ENCODE measurements at regions of chr3 and their contacts with region 1.

Region 1: GRCh38 chr3:196739671-196740480 is at the start of gene PAK2:
- DNase-seq: peak; percentile 82 to 93 (median 86)
- ATAC-seq: peak; percentile 76 to 83
- H3K4me3 Mint-ChIP-seq: peak within 1 kb of the TSS; percentile 95 to 100 (median 98)
- H3K27ac Mint-ChIP-seq: peak within 1 kb of the TSS; percentile 95 to 100 (median 99)
- H3K4me1 Mint-ChIP-seq: peaks cover 16 to 40% (median 29%) of the 10 kb centered on the region in 4 donors
- H3K27me3 Mint-ChIP-seq: no peaks in the 10 kb centered on the region
- polyA plus RNA-seq, gene PAK2: 28.4 to 30.3 (median 30.1) TPM

Region 2: GRCh38 chr3:196568246-196569002 is 171.5 kb before region 1 on chr3 and contains the starts of genes FBXO45 and WDR53:
- POLR2A ChIA-PET with region 1: interaction called, 14 read pairs
- DNase-seq: peak; percentile 92 to 96 (median 95)
- ATAC-seq: peak; percentile 91 to 92
- H3K4me3 Mint-ChIP-seq: peak within 1 kb of the TSS; percentile 85 to 99 (median 97)
- H3K27ac Mint-ChIP-seq: peak within 1 kb of the TSS; percentile 90 to 99 (median 98)
- H3K4me1 Mint-ChIP-seq: peaks cover 17 to 52% (median 35%) of the 10 kb centered on the region in 4 donors
- H3K27me3 Mint-ChIP-seq: no peaks in the 10 kb centered on the region
- polyA plus RNA-seq, gene FBXO45: 1.7 to 2.9 (median 2.8) TPM
- polyA plus RNA-seq, gene WDR53: 11.8 to 17.4 (median 12.6) TPM

Region 3: GRCh38 chr3:196677353-196677752 is 62.5 kb before region 1 on chr3:
- POLR2A ChIA-PET with region 1: no interaction called
- DNase-seq: no peak
- ATAC-seq: no peak
- H3K4me3 Mint-ChIP-seq: no peak overlapping the region
- H3K27ac Mint-ChIP-seq: no peak overlapping the region
- H3K4me1 Mint-ChIP-seq: peaks cover 0 to 14% (median 0%) of the 10 kb centered on the region in 4 donors
- H3K27me3 Mint-ChIP-seq: no peaks in the 10 kb centered on the region

Region 4: DNA sequence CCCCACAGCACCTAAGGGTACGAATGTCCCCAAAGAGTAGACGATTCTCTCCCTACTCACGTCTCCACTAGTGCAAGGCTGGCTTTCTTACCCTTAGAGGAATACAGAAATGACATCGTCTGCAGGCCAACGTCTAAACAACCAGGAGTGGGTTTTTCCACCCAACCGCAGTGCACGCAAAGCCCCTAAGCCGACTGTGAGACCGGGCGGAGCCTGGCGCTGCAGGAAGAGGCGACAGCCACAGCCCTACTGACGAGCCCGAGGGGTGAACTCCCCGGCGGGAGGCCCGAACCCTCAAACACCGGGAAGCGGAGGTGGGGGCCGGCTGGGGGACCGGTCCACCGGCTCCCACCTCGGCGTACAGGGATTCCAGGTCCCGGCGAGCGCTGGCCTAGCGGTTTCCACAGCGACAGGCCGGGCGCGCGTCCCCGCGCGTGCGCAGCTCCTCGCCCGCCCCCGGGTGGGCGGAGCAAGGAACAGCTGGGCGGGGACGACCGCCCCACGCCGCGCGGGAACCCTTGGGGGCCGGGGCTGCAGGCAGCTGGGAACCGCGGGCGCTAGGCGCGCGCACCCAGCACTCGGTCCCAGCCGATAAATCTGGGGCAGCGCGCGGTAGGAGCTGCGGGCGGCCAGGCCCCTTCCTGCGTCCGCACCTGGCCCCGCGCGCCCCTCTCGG is 27.9 kb before region 1 on chr3 and contains the starts of genes CEP19 and PIGX:
- POLR2A ChIA-PET with region 1: interaction called, 36 read pairs
- DNase-seq: peak; percentile 81 to 97 (median 92)
- ATAC-seq: peak; percentile 88 to 90
- H3K4me3 Mint-ChIP-seq: peak within 1 kb of the TSS; percentile 85 to 98 (median 95)
- H3K27ac Mint-ChIP-seq: peak within 1 kb of the TSS; percentile 92 to 99 (median 98)
- H3K4me1 Mint-ChIP-seq: peaks cover 7 to 40% (median 28%) of the 10 kb centered on the region in 4 donors
- H3K27me3 Mint-ChIP-seq: no peaks in the 10 kb centered on the region
- polyA plus RNA-seq, gene CEP19: 4.4 to 6.9 (median 4.6) TPM
- polyA plus RNA-seq, gene PIGX: 28.9 to 32.6 (median 32.1) TPM

Region 5: DNA sequence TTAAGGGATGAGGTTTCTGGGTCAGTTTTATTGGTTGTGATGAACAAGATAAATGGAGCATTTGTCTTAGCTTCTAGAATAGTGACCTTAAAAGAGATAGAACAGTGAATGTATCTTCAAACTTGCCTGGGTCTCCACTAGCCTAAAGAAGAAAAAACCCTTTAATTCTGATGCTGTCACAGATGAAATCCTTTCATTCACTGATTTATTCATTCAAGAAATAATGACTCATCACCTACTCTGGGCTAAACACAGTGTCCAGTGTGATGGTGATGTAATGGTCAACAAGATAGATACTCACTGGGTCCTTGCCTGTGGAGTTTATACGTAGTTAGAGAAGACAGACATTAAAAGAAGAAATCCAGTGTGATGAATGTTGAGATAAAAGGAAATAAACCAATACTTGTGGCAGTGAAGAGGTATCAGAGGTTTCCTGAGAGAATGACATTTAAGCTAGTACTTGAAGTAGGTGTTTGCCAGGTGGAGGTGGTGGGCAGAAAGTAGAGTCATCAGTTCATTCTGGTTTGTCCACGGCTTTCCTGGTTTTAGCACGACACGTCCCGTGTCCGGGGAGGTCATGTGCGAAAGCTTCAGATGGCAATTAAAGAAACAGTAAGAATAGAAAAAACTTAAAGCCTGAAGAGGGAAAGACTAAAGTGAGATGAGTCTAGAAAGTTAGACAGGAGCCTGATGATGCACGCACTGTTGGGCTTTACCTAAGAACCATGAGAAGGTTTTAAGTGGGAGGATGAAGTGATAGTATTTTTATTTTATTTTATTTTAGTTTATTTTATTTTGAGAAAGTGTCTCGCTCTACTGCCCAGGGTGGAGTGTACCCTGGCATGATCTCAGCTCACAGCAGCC is 18.2 kb after region 1 on chr3:
- POLR2A ChIA-PET with region 1: no interaction called
- DNase-seq: peak in 1 of 10 donors; percentile 9
- ATAC-seq: peak; percentile 39 to 73
- H3K4me3 Mint-ChIP-seq: peak overlapping the region in 8 of 10 donors; percentile 0 to 54 (median 30)
- H3K27ac Mint-ChIP-seq: peak overlapping the region; percentile 20 to 86 (median 78)
- H3K4me1 Mint-ChIP-seq: peaks cover 30 to 65% (median 60%) of the 10 kb centered on the region in 4 donors
- H3K27me3 Mint-ChIP-seq: no peaks in the 10 kb centered on the region

Region 6: GRCh38 chr3:196867507-196868296 is 127.8 kb after region 1 on chr3 and contains the start of gene SENP5:
- POLR2A ChIA-PET with region 1: interaction called, 21 read pairs
- DNase-seq: peak; percentile 79 to 92 (median 88)
- ATAC-seq: peak; percentile 95
- H3K4me3 Mint-ChIP-seq: peak within 1 kb of the TSS; percentile 82 to 98 (median 95)
- H3K27ac Mint-ChIP-seq: peak within 1 kb of the TSS; percentile 92 to 98 (median 96)
- H3K4me1 Mint-ChIP-seq: peaks cover 6 to 39% (median 29%) of the 10 kb centered on the region in 4 donors
- H3K27me3 Mint-ChIP-seq: no peaks in the 10 kb centered on the region
- polyA plus RNA-seq, gene SENP5: 5.4 to 8.2 (median 8.0) TPM

Region 7: DNA sequence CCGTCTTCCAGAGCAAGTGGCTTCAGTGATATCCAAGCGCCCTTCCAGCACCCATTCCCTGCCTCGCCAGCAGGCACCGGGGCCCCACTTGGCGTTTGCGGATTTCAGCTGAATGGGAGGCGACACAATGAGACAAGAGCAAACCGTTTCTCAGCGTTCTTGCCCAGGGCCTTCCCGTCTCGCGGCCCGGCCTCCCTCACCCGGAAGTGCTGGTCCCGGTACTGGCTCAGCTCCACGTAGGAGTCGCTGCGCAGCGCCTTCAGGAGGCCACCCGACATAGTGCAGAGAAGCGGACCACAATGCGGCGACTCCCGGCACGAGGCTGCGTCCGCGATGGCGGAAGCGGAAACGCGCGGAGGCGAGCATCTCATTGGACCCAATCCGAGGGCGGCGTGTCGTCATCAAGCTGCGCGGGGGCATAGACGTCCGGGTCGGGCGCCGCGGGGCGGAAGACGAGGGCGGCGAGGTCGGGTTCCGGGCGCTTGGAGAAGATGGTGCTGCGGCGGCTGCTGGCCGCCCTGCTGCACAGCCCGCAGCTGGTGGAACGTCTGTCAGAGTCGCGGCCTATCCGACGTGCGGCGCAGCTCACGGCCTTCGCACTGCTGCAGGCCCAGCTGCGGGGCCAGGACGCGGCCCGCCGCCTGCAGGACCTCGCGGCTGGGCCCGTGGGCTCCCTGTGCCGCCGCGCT is 202.5 kb after region 1 on chr3 and contains the start of gene NCBP2:
- POLR2A ChIA-PET with region 1: interaction called, 14 read pairs
- DNase-seq: peak; percentile 98 to 100 (median 99)
- ATAC-seq: peak; percentile 93
- H3K4me3 Mint-ChIP-seq: peak within 1 kb of the TSS; percentile 87 to 99 (median 96)
- H3K27ac Mint-ChIP-seq: peak within 1 kb of the TSS; percentile 95 to 99 (median 98)
- H3K4me1 Mint-ChIP-seq: peaks cover 23 to 54% (median 51%) of the 10 kb centered on the region in 4 donors
- H3K27me3 Mint-ChIP-seq: peaks cover 0 to 3% (median 0%) of the 10 kb centered on the region in 5 donors
- polyA plus RNA-seq, gene NCBP2: 54.9 to 87.0 (median 70.8) TPM

Measured in naive thymus-derived CD8-positive, alpha-beta T cell (primary cell).